Ovary (tissue), 10 donors: ENCODE measurements at regions of chr15 and their contacts with region 1.

Region 1: GRCh38 chr15:89893696-89894455 is at the start of gene AP3S2:
- DNase-seq: peak; percentile 88 to 92 (median 89)
- H3K4me3 ChIP-seq: peak within 1 kb of the TSS; percentile 65
- H3K27ac ChIP-seq: peak within 1 kb of the TSS; percentile 76 to 80
- H3K4me1 ChIP-seq: peaks cover 1% of the 10 kb centered on the region
- H3K27me3 ChIP-seq: no peaks in the 10 kb centered on the region
- CTCF ChIP-seq: peak in 1 of 3 donors; percentile 19
- EP300 ChIP-seq: no peak
- POLR2A ChIP-seq: peak; percentile 50
- total RNA-seq, gene AP3S2: 15.3 to 40.2 (median 30.7) TPM

Region 2: GRCh38 chr15:89399238-89400120 is 494.4 kb before region 1 on chr15:
- intact Hi-C with region 1: no loop called
- DNase-seq: no peak
- H3K4me3 ChIP-seq: no peak overlapping the region
- H3K27ac ChIP-seq: no peak overlapping the region
- H3K4me1 ChIP-seq: no peaks in the 10 kb centered on the region
- H3K27me3 ChIP-seq: no peaks in the 10 kb centered on the region
- CTCF ChIP-seq: no peak
- EP300 ChIP-seq: no peak
- POLR2A ChIP-seq: no peak

Region 3: GRCh38 chr15:90001683-90002427 is 108.0 kb after region 1 on chr15:
- intact Hi-C with region 1: loop called in 1 of 4 experiments (anchors 5 kb)
- DNase-seq: peak; percentile 61 to 78 (median 73)
- H3K4me3 ChIP-seq: peak overlapping the region; percentile 87
- H3K27ac ChIP-seq: peak overlapping the region; percentile 86 to 92
- H3K4me1 ChIP-seq: peaks cover 9% of the 10 kb centered on the region
- H3K27me3 ChIP-seq: no peaks in the 10 kb centered on the region
- CTCF ChIP-seq: no peak
- EP300 ChIP-seq: no peak
- POLR2A ChIP-seq: no peak

Region 4: GRCh38 chr15:90062023-90062442 is 168.2 kb after region 1 on chr15:
- intact Hi-C with region 1: loop called in 1 of 4 experiments (anchors 10 kb)
- DNase-seq: peak; percentile 61 to 74 (median 65)
- H3K4me3 ChIP-seq: no peak overlapping the region
- H3K27ac ChIP-seq: no peak overlapping the region
- H3K4me1 ChIP-seq: peaks cover 8% of the 10 kb centered on the region
- H3K27me3 ChIP-seq: no peaks in the 10 kb centered on the region
- CTCF ChIP-seq: no peak
- EP300 ChIP-seq: no peak
- POLR2A ChIP-seq: no peak

Region 5: GRCh38 chr15:90071208-90071807 is 177.4 kb after region 1 on chr15:
- intact Hi-C with region 1: loop called in 2 of 4 experiments (anchors 10 kb)
- DNase-seq: peak; percentile 65 to 81 (median 80)
- H3K4me3 ChIP-seq: no peak overlapping the region
- H3K27ac ChIP-seq: no peak overlapping the region
- H3K4me1 ChIP-seq: no peaks in the 10 kb centered on the region
- H3K27me3 ChIP-seq: no peaks in the 10 kb centered on the region
- CTCF ChIP-seq: peak; percentile 38 to 53 (median 43)
- EP300 ChIP-seq: no peak
- POLR2A ChIP-seq: no peak

Region 6: GRCh38 chr15:90221246-90221900 is 327.5 kb after region 1 on chr15:
- intact Hi-C with region 1: loop called in 1 of 4 experiments (anchors 10 kb)
- DNase-seq: peak; percentile 76 to 87 (median 84)
- H3K4me3 ChIP-seq: no peak overlapping the region
- H3K27ac ChIP-seq: peak overlapping the region in 1 of 2 donors; percentile 39
- H3K4me1 ChIP-seq: no peaks in the 10 kb centered on the region
- H3K27me3 ChIP-seq: no peaks in the 10 kb centered on the region
- CTCF ChIP-seq: peak; percentile 48 to 82 (median 56)
- EP300 ChIP-seq: no peak
- POLR2A ChIP-seq: no peak